Posterior vena cava (tissue), 2 donors: ENCODE measurements at regions of chr9 and their contacts with region 1.

Region 1: DNA sequence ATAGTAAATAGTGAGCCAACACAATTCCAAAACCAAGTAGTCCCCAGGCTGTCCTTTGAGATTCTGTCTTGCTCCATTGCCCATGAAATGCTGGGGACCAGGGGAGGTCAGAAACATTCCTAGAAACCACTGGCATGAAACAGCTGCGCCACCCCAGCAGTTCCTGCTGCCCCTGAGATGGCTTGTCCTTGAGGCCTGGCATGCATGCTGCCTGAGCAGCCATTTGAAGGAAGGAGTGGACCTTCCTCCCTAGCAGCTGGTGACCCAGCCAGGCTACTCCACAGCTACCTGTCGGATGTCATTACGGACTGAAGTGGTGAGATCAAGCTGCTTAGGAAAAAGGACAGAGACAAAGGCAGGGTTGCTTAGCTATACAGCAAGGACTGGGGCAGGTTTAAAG is 260.6 kb downstream of the DENND1A start:
- DNase-seq: no peak

Region 2: DNA sequence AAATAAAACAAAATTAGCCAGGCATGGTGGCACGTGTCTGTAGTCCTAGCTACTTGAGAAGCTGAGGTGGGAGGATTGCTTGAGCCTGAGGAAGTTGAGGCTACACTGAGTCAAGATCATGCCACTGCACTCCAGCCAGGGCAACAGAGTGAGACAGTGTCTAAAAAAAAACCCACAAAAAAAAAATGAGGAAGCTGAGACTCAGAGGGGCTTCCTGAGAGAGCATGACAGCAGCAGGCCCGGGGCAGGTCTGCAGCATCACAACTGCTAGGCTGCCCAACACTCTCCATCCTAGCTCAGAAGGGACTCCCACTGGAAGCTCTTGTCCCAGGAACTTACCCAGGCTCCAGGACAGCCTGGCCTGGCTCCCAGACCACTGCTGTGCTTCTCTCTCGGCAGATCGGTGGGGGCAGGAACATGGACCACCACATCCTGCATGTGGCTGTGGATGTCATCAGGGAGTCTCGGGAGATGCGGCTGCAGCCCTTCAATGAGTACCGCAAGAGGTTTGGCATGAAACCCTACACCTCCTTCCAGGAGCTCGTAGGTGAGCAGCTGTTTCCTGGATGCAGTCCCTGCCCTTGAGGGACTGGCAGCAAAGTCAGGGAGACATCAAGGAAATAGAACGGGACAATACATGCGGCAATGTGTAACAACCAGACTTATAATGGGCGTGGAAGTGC is 1279.4 kb before region 1 on chr9:
- intact Hi-C with region 1: no loop called
- DNase-seq: peak; percentile 52

Region 3: GRCh38 chr9:123710299-123710698 is 41.0 kb after region 1 on chr9:
- intact Hi-C with region 1: loop called in 1 of 2 experiments (anchors 2 kb)
- DNase-seq: no peak